ENCODE measurements at regions of chr18 and their contacts with region 1.

Region 1: GRCh38 chr18:62802523-62802922 is 87.2 kb downstream of the PHLPP1 start:
- DNase-seq: peak; percentile 26
- H3K4me3 ChIP-seq: no peak overlapping the region
- H3K27ac ChIP-seq: no peak overlapping the region
- H3K4me1 ChIP-seq: peaks cover 20% of the 10 kb centered on the region
- H3K27me3 ChIP-seq: no peaks in the 10 kb centered on the region
- CTCF ChIP-seq: peak; percentile 54

Region 2: GRCh38 chr18:62721839-62722795 is 80.4 kb before region 1 on chr18:
- CTCF ChIA-PET with region 1: no interaction called
- POLR2A ChIA-PET with region 1: no interaction called
- intact Hi-C with region 1: loop called (anchors 5 kb)
- DNase-seq: peak; percentile 90
- H3K4me3 ChIP-seq: peak overlapping the region; percentile 22
- H3K27ac ChIP-seq: peak overlapping the region; percentile 79
- H3K4me1 ChIP-seq: peaks cover 67% of the 10 kb centered on the region
- H3K27me3 ChIP-seq: no peaks in the 10 kb centered on the region
- CTCF ChIP-seq: no peak

Region 3: GRCh38 chr18:64271246-64271645 is 1468.7 kb after region 1 on chr18:
- CTCF ChIA-PET with region 1: no interaction called
- POLR2A ChIA-PET with region 1: no interaction called
- intact Hi-C with region 1: no loop called
- DNase-seq: peak; percentile 24
- H3K4me3 ChIP-seq: no peak overlapping the region
- H3K27ac ChIP-seq: no peak overlapping the region
- H3K4me1 ChIP-seq: peaks cover 15% of the 10 kb centered on the region
- H3K27me3 ChIP-seq: no peaks in the 10 kb centered on the region
- CTCF ChIP-seq: no peak